Sciatic nerve (tissue), 2 donors: ENCODE measurements at regions of chr18 and their contacts with region 1.

Region 1: GRCh38 chr18:53126201-53126600 is 786.2 kb downstream of the DCC start:
- DNase-seq: no peak
- ATAC-seq: no peak

Region 2: GRCh38 chr18:51569153-51569552 is 1557.0 kb before region 1 on chr18:
- intact Hi-C with region 1: loop called (anchors 5 kb)
- DNase-seq: no peak
- ATAC-seq: no peak